Activated T-helper 1 cell treated with anti-CD3 and anti-CD28 coated beads, Interleukin-12 subunit alpha, Interleukin-12 subunit beta, Interleukin-2, Interleukin-4 antibody, amounts not matched to agents 30 ng/mL and 10 ng/mL and 1 ng/mL, durations not matched to agents 14 hours and 24 hours and 36 hours (primary cell): ENCODE measurements at regions of chr9 and their contacts with region 1.

Region 1: DNA sequence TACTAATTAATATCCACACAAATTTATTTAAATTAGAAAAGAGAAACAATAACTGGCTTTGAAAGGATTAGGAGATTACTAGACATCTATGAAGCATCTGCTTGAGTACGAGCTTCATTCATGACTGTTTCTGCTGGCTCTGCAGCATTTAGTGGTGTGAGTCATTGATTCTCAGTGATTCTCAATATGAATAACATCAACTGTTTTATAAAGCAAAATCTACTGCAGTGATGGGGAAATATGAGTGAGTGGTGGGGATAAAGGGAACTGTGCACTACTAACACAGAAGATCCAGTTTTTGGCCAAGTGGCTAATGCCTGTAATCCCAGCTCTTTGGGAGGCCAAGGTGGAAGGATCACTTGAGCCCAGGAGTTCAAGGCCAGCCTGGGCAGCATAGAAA is 8.4 kb downstream of the FNBP1 start:
- DNase-seq: no peak
- H3K4me3 Mint-ChIP-seq: peak overlapping the region; percentile 52
- H3K27ac Mint-ChIP-seq: peak overlapping the region; percentile 98
- H3K4me1 Mint-ChIP-seq: peaks cover 84% of the 10 kb centered on the region
- H3K27me3 Mint-ChIP-seq: no peaks in the 10 kb centered on the region

Region 2: GRCh38 chr9:129988607-129989361 is 45.8 kb before region 1 on chr9:
- intact Hi-C with region 1: loop called (anchors 1 kb)
- DNase-seq: no peak
- H3K4me3 Mint-ChIP-seq: peak overlapping the region; percentile 8
- H3K27ac Mint-ChIP-seq: peak overlapping the region; percentile 88
- H3K4me1 Mint-ChIP-seq: peaks cover 55% of the 10 kb centered on the region
- H3K27me3 Mint-ChIP-seq: no peaks in the 10 kb centered on the region

Region 3: GRCh38 chr9:130015353-130016019 is 19.1 kb before region 1 on chr9:
- intact Hi-C with region 1: loop called (anchors 1 kb)
- DNase-seq: no peak
- H3K4me3 Mint-ChIP-seq: no peak overlapping the region
- H3K27ac Mint-ChIP-seq: no peak overlapping the region
- H3K4me1 Mint-ChIP-seq: peaks cover 65% of the 10 kb centered on the region
- H3K27me3 Mint-ChIP-seq: no peaks in the 10 kb centered on the region

Region 4: DNA sequence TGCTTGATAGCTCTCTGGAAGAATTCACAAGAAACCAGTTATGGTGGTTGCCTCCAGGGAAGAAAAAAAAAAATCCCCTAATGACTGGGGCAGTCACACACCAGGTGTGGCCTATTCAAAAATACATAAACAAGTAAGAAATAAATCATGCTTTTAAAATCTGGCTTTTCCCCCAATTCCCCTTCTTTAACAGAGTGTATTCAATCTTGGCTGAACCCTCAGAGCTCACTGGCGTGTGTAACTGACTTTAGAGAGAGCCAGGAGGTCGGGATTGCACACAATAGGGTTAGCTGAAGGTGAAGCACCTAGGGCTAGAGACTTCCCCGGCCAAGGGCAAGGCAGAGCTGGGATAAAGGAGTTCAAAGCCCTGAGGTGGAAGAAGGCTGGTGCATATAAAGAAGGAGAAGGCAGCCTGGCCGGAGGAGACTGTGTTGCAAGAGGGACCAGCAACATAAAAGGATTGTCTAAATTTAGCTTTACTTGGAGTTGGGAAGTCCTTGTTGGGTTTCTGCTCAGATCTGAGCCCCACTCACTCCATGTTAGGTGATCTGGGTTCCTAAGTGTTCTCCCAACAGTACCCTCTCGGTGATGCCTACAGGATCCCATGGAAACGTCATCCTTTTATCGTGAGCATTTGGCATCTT is 11.3 kb before region 1 on chr9:
- intact Hi-C with region 1: loop called (anchors 1 kb)
- DNase-seq: no peak
- H3K4me3 Mint-ChIP-seq: peak overlapping the region; percentile 36
- H3K27ac Mint-ChIP-seq: peak overlapping the region; percentile 95
- H3K4me1 Mint-ChIP-seq: peaks cover 86% of the 10 kb centered on the region
- H3K27me3 Mint-ChIP-seq: no peaks in the 10 kb centered on the region

Region 5: GRCh38 chr9:130078547-130078946 is 44.0 kb after region 1 on chr9:
- intact Hi-C with region 1: no loop called
- DNase-seq: no peak
- H3K4me3 Mint-ChIP-seq: no peak overlapping the region
- H3K27ac Mint-ChIP-seq: no peak overlapping the region
- H3K4me1 Mint-ChIP-seq: peaks cover 7% of the 10 kb centered on the region
- H3K27me3 Mint-ChIP-seq: no peaks in the 10 kb centered on the region